HEK293T (cell line): ENCODE measurements at regions of chr12 and their contacts with region 1.

Region 1: GRCh38 chr12:101951002-101951670 is 73.8 kb downstream of the DRAM1 start:
- DNase-seq: no peak

Region 2: DNA sequence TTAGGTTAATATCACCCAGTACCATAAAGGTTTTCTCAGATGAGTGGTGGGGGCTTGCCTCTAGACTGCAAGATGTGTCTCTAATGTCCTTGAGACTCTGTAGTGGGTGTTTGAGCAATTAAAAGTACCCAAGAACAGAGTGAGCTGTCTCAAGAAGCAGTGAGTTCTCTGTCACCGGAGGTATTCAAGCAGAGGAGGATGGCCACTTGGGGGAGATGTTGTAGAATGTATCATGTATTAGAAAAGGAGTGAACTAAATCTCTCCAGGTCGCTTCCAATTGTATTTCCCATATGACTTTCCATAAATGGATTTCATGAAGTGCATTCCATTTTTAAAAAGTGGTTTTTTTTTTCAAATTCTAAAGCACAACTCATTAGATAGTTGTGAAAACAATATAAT is 1559.3 kb before region 1 on chr12:
- CTCF ChIA-PET with region 1: no interaction called
- POLR2A ChIA-PET with region 1: no interaction called
- DNase-seq: no peak

Region 3: GRCh38 chr12:102484428-102484958 is 533.4 kb after region 1 on chr12:
- CTCF ChIA-PET with region 1: interaction called, 11 read pairs
- POLR2A ChIA-PET with region 1: no interaction called
- DNase-seq: peak; percentile 57